Breast epithelium (tissue), 4 donors: ENCODE measurements at regions of chr2 and their contacts with region 1.

Region 1: GRCh38 chr2:144466637-144467036 is 53.3 kb downstream of the ZEB2 start:
- DNase-seq: no peak
- H3K4me3 ChIP-seq: no peak overlapping the region
- H3K27ac ChIP-seq: no peak overlapping the region
- H3K4me1 ChIP-seq: no peaks in the 10 kb centered on the region
- H3K27me3 ChIP-seq: no peaks in the 10 kb centered on the region
- CTCF ChIP-seq: no peak
- POLR2A ChIP-seq: no peak

Region 2: GRCh38 chr2:144430722-144431391 is 35.8 kb before region 1 on chr2:
- intact Hi-C with region 1: no loop called
- DNase-seq: no peak
- H3K4me3 ChIP-seq: no peak overlapping the region
- H3K27ac ChIP-seq: peak overlapping the region; percentile 16 to 62
- H3K4me1 ChIP-seq: peaks cover 0 to 5% of the 10 kb centered on the region in 2 donors
- H3K27me3 ChIP-seq: no peaks in the 10 kb centered on the region
- CTCF ChIP-seq: no peak
- POLR2A ChIP-seq: no peak

Region 3: DNA sequence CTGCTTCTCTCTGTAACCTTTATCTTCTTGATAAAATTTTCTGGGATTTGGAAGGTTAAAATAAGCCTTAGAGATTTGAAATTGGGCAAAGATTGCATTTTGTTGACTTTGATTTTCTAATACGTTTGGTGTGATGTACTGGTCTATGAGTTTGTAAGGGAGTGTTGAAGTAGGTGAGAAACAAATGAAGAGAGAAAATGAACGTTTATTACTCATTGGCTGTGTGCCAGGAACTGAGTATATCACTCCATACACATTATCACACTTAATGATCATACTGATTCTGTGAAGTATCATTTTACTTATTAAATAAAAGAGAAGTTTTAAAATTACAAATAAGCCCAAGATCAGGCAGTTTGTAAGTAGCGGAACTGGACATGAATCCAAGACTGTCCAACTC is 848.4 kb after region 1 on chr2:
- intact Hi-C with region 1: loop called (anchors 5 kb)
- DNase-seq: no peak
- H3K4me3 ChIP-seq: no peak overlapping the region
- H3K27ac ChIP-seq: no peak overlapping the region
- H3K4me1 ChIP-seq: no peaks in the 10 kb centered on the region
- H3K27me3 ChIP-seq: no peaks in the 10 kb centered on the region
- CTCF ChIP-seq: no peak
- POLR2A ChIP-seq: no peak